Testis (tissue), 5 donors: ENCODE measurements at regions of chr19 and their contacts with region 1.

Region 1: DNA sequence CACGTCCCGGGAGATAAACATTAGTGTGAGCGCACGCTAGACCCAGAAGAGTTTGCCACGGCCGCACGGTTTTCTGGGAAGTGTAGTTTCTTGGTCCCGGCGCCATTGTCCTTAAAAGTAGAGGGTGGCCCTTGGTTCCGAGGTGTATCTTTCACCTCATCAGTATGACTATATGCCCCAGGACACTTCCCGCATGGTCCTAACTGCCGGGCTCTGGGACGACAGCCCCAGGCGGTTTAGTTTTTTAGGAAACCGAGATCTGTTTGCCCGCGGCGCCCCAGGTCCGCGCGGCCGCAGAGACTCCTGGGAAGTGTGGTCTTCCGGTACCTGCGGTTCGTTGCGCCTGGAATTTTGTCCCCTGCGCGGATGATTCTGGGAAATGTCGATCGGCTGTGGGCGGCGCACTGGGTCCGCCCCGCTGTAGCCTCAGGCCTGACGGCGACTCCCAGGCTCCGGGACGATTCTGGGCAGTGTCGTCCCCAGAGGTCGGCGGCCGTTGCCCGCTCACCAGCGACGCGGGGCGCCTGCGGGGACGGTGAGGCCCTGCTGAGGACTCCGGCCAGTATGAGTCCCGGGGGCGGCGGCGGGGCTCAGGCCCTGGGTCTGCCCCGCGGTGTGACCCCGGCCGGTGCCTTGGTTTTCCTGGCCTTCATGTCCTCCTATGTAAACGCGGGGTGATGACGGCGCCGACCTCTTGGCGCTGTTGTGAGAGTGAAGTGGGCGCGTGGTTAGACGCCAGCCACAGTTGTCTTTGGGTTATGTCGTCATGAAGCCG is at the start of gene ZNF181:
- DNase-seq: peak; percentile 95
- H3K4me3 ChIP-seq: peak within 1 kb of the TSS; percentile 86 to 88
- H3K27ac ChIP-seq: peak within 1 kb of the TSS; percentile 93 to 97
- H3K4me1 ChIP-seq: peaks cover 6% of the 10 kb centered on the region
- H3K27me3 ChIP-seq: no peaks in the 10 kb centered on the region
- CTCF ChIP-seq: no peak
- POLR2A ChIP-seq: no peak
- total RNA-seq, gene ZNF181: 16.1 to 18.5 TPM

Region 2: DNA sequence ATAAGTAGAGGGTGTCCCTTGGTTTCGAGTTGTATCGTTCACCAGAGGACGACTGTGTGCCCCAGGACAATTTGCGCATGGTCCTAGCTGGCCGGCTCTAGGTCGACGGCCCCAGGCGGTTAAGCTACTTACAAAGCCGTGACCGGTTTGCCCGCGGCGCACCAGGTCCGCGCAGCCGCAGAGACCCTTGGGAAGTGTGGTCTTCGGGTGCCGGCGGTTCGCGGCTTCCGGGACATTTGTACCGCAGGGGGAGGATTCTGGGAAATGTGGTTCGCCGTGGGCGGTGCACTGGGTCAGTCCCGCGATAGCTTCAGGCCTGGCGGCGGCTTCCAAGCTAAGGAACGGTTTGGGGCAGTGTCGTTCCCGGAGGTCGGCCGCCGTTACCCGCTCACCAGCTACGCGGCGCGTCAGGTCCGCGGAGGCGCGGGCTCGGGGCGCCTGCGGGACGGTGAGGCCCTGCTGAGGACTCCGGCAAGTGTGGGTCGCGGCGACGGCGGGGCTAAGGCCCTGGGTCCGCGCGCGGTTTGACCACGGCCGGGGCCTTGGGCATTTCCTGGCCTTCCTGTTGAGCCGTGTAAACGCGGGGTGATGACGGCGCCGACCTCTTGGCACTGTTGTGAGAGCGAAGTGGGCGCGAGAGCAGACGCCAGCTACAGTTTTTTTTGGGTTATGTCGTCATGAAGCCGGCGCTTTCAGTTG is 56.5 kb before region 1 on chr19 and contains the start of gene ZNF302:
- intact Hi-C with region 1: loop called (anchors 5 kb)
- DNase-seq: peak; percentile 99
- H3K4me3 ChIP-seq: peak within 1 kb of the TSS; percentile 78 to 83
- H3K27ac ChIP-seq: peak within 1 kb of the TSS; percentile 94 to 95
- H3K4me1 ChIP-seq: no peaks in the 10 kb centered on the region
- H3K27me3 ChIP-seq: no peaks in the 10 kb centered on the region
- CTCF ChIP-seq: no peak
- POLR2A ChIP-seq: no peak
- total RNA-seq, gene ZNF302: 36.7 to 50.8 TPM